Endothelial cell of umbilical vein (primary cell): ENCODE measurements at regions of chrX and their contacts with region 1.

Region 1: DNA sequence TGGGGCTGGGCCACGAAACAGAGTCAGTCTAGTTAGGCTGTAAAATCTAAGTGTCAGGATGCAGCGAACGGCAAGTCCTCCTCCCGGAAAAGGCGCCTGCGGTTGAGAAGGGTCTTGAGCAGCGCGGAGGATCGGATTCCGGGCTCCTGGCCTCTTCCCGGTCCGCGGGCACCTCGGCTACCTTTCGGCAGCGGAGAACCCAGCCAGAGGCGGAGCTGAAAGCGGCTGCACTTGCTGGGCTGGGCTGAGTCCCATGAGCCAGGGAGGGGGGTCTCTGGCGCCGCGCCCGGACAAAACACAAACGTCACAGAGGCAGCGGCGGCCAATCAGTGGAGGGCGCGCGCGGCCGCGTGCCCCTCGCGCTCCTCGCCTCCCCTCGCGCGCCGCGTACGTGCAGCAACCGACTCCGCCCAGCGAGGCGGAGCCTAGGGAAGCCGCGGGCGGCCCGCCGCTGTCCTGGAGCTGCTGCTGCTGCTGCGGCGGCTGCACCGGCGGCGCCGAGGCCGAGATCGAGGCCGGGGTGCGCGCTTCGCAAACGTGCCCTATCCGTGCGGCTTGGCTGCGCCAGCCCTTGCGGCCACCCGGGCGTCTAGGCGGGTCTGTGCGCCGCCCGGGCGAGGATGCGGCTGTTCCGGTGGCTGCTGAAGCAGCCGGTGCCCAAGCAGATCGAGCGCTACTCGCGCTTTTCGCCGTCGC is at the start of gene PDK3:
- DNase-seq: peak; percentile 90
- H3K4me3 ChIP-seq: peak within 1 kb of the TSS; percentile 15 to 69 (median 46)
- H3K27ac ChIP-seq: no peak within 1 kb of the TSS
- H3K4me1 ChIP-seq: no peaks in the 10 kb centered on the region
- H3K27me3 ChIP-seq: no peaks in the 10 kb centered on the region
- CTCF ChIP-seq: no peak
- POLR2A ChIP-seq: no peak
- total RNA-seq, gene PDK3: 3.9 and 5.9 TPM in 2 replicates

Region 2: GRCh38 chrX:24426391-24426790 is 38.6 kb before region 1 on chrX:
- CTCF ChIA-PET with region 1: no interaction called
- POLR2A ChIA-PET with region 1: no interaction called
- dilution Hi-C with region 1: no loop called
- intact Hi-C with region 1: loop called (anchors 2 kb)
- DNase-seq: peak; percentile 3
- H3K4me3 ChIP-seq: no peak overlapping the region
- H3K27ac ChIP-seq: no peak overlapping the region
- H3K4me1 ChIP-seq: peaks cover 11% of the 10 kb centered on the region
- H3K27me3 ChIP-seq: no peaks in the 10 kb centered on the region
- CTCF ChIP-seq: no peak
- POLR2A ChIP-seq: no peak

Region 3: GRCh38 chrX:24476576-24476975 is 11.6 kb after region 1 on chrX:
- CTCF ChIA-PET with region 1: no interaction called
- POLR2A ChIA-PET with region 1: no interaction called
- dilution Hi-C with region 1: no loop called
- intact Hi-C with region 1: loop called (anchors 1 kb)
- DNase-seq: no peak
- H3K4me3 ChIP-seq: no peak overlapping the region
- H3K27ac ChIP-seq: no peak overlapping the region
- H3K4me1 ChIP-seq: peaks cover 3% of the 10 kb centered on the region
- H3K27me3 ChIP-seq: no peaks in the 10 kb centered on the region
- CTCF ChIP-seq: no peak
- POLR2A ChIP-seq: no peak

Region 4: GRCh38 chrX:24491749-24492148 is 26.8 kb after region 1 on chrX:
- CTCF ChIA-PET with region 1: no interaction called
- POLR2A ChIA-PET with region 1: no interaction called
- dilution Hi-C with region 1: no loop called
- intact Hi-C with region 1: no loop called
- DNase-seq: no peak
- H3K4me3 ChIP-seq: no peak overlapping the region
- H3K27ac ChIP-seq: no peak overlapping the region
- H3K4me1 ChIP-seq: peaks cover 12% of the 10 kb centered on the region
- H3K27me3 ChIP-seq: no peaks in the 10 kb centered on the region
- CTCF ChIP-seq: no peak
- POLR2A ChIP-seq: no peak